Psoas muscle (tissue), 8 donors: ENCODE measurements at regions of chr1 and their contacts with region 1.

Region 1: GRCh38 chr1:54070171-54070837 is 16.9 kb downstream of the TCEANC2 start:
- DNase-seq: no peak
- ATAC-seq: peak in 2 of 4 donors; percentile 66 to 82
- H3K4me3 ChIP-seq: no peak overlapping the region
- H3K27ac ChIP-seq: no peak overlapping the region
- H3K4me1 ChIP-seq: no peaks in the 10 kb centered on the region
- H3K27me3 ChIP-seq: no peaks in the 10 kb centered on the region
- CTCF ChIP-seq: peak; percentile 76

Region 2: DNA sequence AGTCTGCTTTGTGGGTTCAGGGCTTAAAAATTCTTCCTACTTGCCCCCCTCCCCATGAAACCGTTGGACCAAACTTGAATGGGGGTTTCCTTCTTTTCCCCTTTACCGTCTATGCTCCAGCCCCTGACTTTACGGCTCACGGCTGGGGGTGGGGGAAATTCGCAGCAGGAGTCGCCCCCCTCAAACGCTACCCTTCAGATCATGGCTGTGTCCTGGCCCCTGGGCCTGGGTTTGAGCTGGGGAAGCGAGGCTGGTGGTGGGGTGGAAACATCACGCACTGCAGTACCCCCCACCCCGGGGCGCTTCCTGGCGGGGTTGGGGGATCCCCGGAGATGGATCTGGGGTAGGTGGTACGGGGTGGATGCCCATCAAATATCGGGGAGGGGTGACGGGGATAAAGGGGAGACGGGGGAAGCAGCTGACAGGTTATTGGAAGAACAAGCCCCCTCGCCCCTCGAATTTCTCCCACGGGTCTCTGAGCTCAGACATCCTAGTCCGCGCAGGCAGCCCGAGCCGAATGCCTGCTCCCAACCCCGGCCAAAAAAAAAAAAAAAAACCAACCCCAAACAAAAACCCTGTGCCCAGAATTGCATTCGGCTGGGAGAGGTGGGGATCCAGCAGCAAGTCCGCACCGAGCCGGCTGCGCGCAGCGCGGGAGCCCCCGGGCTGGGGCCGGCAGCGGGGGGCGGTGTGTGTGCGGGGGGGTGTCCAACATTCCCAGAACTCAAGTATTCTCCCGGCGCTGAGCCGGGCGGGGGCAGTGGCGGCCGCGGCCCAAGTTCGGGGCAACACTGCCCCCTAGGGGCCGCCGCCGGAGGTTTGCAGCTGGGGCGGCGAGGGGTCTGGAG is 418.7 kb after region 1 on chr1:
- intact Hi-C with region 1: loop called in 1 of 2 experiments (anchors 2 kb)
- DNase-seq: peak; percentile 78 to 89
- ATAC-seq: peak; percentile 79 to 83 (median 82)
- H3K4me3 ChIP-seq: peak overlapping the region; percentile 81
- H3K27ac ChIP-seq: peak overlapping the region; percentile 87
- H3K4me1 ChIP-seq: peaks cover 27% of the 10 kb centered on the region
- H3K27me3 ChIP-seq: no peaks in the 10 kb centered on the region
- CTCF ChIP-seq: peak; percentile 96